IMR-90 (cell line): ENCODE measurements at regions of chr13 and their contacts with region 1.

Region 1: GRCh38 chr13:90430127-90430526 is 917.4 kb upstream of the MIR17HG start:
- DNase-seq: no peak
- ATAC-seq: no peak
- H3K4me3 ChIP-seq: no peak overlapping the region
- H3K27ac ChIP-seq: no peak overlapping the region
- H3K4me1 ChIP-seq: no peaks in the 10 kb centered on the region
- H3K27me3 ChIP-seq: no peaks in the 10 kb centered on the region; the same call in 1 of the 2 replicates
- CTCF ChIP-seq: no peak
- POLR2A ChIP-seq: no peak
- RAD21 ChIP-seq: no peak

Region 2: GRCh38 chr13:91896547-91896946 is 1466.4 kb after region 1 on chr13:
- CTCF ChIA-PET with region 1: no interaction called
- POLR2A ChIA-PET with region 1: no interaction called
- dilution Hi-C with region 1: no loop called
- in situ Hi-C with region 1: no loop called
- intact Hi-C with region 1: loop called (anchors 5 kb)
- DNase-seq: no peak
- ATAC-seq: no peak
- H3K4me3 ChIP-seq: no peak overlapping the region
- H3K27ac ChIP-seq: no peak overlapping the region
- H3K4me1 ChIP-seq: no peaks in the 10 kb centered on the region
- H3K27me3 ChIP-seq: no peaks in the 10 kb centered on the region
- CTCF ChIP-seq: no peak
- POLR2A ChIP-seq: no peak
- RAD21 ChIP-seq: no peak